ENCODE measurements at regions of chr4 and their contacts with region 1.

Region 1: GRCh38 chr4:36624030-36624429 is 342.6 kb downstream of the DTHD1 start:
- DNase-seq: no peak
- H3K4me3 ChIP-seq: no peak overlapping the region
- H3K4me3 Mint-ChIP-seq: no peak overlapping the region
- H3K27ac Mint-ChIP-seq: no peak overlapping the region
- H3K4me1 ChIP-seq: no peaks in the 10 kb centered on the region
- H3K4me1 Mint-ChIP-seq: no peaks in the 10 kb centered on the region
- H3K27me3 ChIP-seq: no peaks in the 10 kb centered on the region
- H3K27me3 Mint-ChIP-seq: peaks cover 2% of the 10 kb centered on the region
- CTCF ChIP-seq: no peak

Region 2: GRCh38 chr4:36414248-36414647 is 209.8 kb before region 1 on chr4:
- CTCF ChIA-PET with region 1: no interaction called
- POLR2A ChIA-PET with region 1: no interaction called
- intact Hi-C with region 1: loop called (anchors 10 kb)
- DNase-seq: no peak
- H3K4me3 ChIP-seq: no peak overlapping the region
- H3K4me3 Mint-ChIP-seq: no peak overlapping the region
- H3K27ac Mint-ChIP-seq: no peak overlapping the region
- H3K4me1 ChIP-seq: no peaks in the 10 kb centered on the region
- H3K4me1 Mint-ChIP-seq: no peaks in the 10 kb centered on the region
- H3K27me3 ChIP-seq: no peaks in the 10 kb centered on the region
- H3K27me3 Mint-ChIP-seq: peaks cover 10% of the 10 kb centered on the region
- CTCF ChIP-seq: peak; percentile 20 to 26